ENCODE measurements at regions of chr6 and their contacts with region 1.

Region 1: DNA sequence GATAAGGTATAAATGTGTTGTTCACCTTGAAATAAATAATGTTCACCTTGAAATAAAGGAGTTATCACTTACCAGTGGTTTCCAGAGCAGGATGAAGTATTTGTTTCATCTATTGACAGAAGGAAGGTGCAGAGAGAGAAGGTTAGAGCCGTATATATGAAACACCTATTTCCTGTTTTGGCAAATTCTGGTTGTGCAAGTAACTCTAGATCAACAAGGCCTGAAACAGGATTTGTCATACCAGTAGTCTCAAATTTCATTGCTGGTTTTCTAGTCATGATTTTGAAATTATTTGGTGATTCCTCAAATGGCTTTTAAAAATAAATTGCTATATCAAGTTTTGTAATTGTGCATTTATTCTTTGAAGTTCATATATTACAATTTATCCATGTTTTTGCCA is at the start of gene CRISP3:
- DNase-seq: peak; percentile 80
- ATAC-seq: peak; percentile 85
- H3K4me3 ChIP-seq: no peak within 1 kb of the TSS
- H3K27ac ChIP-seq: no peak within 1 kb of the TSS
- H3K4me1 ChIP-seq: peaks cover 15% of the 10 kb centered on the region
- H3K27me3 ChIP-seq: no peaks in the 10 kb centered on the region
- CTCF ChIP-seq: no peak
- total RNA-seq, gene CRISP3: not detected in 2 replicates

Region 2: DNA sequence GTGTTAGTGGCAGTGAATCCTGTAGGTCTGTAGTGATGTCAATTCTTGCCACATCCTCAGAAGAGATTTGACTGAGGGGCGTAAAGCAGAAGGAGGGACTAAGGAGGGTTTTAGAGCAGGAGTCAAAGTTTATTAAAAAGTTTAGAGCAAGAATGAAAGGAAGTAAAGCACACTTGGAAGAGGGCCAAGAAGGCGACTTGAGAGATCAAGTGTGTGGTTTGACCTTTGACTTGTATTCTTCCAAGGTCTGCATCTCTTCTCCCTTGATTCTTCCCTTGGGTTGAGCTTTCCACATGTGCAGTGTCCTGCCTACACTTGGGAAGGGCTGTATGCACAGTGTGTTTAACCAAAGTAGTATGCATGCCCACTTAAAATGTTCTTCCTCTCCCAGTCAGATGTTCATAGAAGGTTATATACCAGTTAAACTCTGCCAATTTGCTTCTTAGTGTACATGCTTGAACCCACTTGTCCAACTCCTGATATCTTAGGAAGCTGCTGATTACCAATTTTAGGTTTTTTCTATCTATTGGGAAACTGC is 908.8 kb before region 1 on chr6:
- CTCF ChIA-PET with region 1: no interaction called
- POLR2A ChIA-PET with region 1: interaction called, 16 read pairs
- intact Hi-C with region 1: no loop called
- DNase-seq: peak; percentile 10
- ATAC-seq: no peak
- H3K4me3 ChIP-seq: no peak overlapping the region
- H3K27ac ChIP-seq: no peak overlapping the region
- H3K4me1 ChIP-seq: no peaks in the 10 kb centered on the region
- H3K27me3 ChIP-seq: no peaks in the 10 kb centered on the region
- CTCF ChIP-seq: no peak